ENCODE measurements at regions of chr1 and their contacts with region 1.

Region 1: DNA sequence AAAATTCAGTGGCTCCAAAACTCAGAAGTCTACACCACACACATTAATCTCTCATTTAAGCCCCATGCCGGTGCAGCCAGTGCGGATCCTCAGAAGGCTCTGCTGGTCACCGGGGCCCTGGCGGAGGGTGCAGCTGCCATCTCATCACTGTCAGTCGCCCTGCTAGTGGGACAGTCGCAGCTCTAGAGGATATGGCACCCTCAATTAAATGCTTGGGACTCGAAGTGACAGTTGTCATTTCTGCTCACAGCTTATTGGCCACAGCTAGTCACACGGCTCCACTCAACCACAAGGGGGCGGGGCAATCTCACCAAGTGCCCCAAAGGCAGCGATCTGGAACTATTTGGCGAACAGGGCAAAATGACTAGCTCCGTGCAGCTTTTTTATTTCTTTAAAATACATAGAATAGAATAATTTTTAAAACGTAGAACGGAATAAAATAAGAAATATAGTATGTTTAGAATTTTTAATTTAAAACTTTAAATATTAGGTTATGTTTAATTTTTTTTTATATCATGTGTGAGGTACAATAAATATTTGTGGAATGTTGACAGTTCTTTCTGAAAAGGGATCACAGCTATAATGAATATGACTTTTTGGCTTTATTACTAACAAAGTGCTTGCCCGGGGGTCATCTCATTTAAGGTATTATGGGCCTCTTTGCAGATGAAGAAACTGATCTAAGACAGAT is 8.0 kb upstream of the MAN1C1 start:
- DNase-seq: peak; percentile 78 to 94
- ATAC-seq: peak; percentile 95 to 99 (median 99)
- H3K4me3 ChIP-seq: no peak overlapping the region
- H3K4me3 Mint-ChIP-seq: no peak overlapping the region
- H3K27ac ChIP-seq: no peak overlapping the region
- H3K27ac Mint-ChIP-seq: no peak overlapping the region
- H3K4me1 ChIP-seq: peaks cover 6% of the 10 kb centered on the region
- H3K4me1 Mint-ChIP-seq: peaks cover 2 to 5% of the 10 kb centered on the region in 2 donors
- H3K27me3 ChIP-seq: peaks cover 2% of the 10 kb centered on the region
- H3K27me3 Mint-ChIP-seq: peaks cover 8 to 13% of the 10 kb centered on the region in 2 donors
- CTCF ChIP-seq: no peak

Region 2: DNA sequence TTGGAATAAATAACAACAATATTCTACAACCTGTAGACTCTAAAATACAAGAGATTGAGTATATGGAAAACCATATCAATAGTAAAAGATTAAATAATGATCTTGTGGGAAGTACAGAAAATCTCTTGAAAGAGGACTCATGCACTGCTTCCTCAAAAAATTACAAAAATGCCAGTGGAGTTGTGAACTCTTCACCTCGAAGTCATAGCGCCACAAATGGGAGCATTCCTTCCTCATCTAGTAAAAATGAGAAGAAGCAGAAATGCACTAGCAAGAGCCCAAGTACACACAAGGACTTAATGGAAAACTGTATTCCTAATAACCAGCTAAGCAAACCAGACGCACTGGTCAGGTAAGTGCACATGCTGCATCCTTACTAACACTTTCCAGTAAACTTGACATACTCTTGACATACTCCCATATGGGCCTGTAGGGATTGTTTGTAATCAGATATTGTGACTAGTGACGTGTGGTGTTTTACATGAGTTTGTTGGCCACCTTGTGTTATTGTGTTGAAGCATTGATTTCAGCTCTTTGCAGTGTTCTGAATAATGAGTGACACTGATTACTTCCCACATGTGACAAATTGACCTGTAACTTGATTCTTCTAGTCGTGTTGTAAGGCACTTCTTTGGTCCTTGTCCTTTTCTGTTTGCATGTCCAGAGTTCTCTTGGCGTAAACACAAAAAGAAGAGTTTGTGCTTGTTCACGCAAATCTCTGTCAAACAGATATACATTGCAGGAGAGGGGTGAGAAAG is 149.9 kb before region 1 on chr1:
- intact Hi-C with region 1: no loop called
- DNase-seq: no peak
- ATAC-seq: no peak
- H3K4me3 ChIP-seq: no peak overlapping the region
- H3K4me3 Mint-ChIP-seq: no peak overlapping the region
- H3K27ac ChIP-seq: no peak overlapping the region
- H3K27ac Mint-ChIP-seq: no peak overlapping the region
- H3K4me1 ChIP-seq: no peaks in the 10 kb centered on the region
- H3K4me1 Mint-ChIP-seq: no peaks in the 10 kb centered on the region
- H3K27me3 ChIP-seq: no peaks in the 10 kb centered on the region
- H3K27me3 Mint-ChIP-seq: no peaks in the 10 kb centered on the region
- CTCF ChIP-seq: no peak

Region 3: DNA sequence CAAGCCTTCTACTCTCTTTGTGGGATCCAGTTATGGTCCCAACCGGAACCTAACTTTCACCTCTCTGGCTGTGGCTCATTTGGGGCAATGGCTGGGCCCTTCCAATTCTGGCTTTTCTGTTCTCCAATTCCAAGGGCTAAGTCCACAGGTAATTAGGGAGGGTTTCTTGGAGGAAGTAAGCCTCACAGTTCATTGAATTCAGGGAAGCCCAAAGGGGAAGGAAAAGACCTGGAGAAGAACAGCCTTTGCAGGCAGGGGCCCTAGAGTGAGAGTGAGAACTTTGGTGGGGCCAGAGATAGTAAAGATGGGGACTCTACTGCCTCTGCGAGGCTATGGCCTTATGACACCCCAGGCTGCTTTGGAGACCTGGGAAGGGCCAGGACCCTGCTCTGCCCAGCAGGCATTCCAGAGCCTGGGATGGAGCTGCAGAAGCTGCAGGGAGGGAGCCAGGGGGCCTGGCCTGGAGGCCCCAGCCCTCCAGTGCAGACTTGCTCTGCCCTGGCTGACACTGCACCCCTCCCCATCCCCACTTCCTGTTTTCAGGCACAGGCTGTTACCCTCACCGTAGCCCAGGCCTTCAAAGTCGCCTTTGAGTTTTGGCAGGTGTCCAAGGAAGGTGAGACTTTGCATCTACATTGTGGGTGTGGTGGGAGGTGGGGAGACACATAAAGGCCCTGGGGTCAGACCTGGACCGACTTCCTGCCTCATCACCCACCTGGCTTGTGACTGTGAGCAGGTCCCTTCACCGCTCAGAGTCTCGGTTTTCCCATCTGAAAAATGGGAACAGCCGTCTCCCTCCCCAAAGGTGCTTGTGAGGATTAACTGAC is 46.3 kb before region 1 on chr1:
- intact Hi-C with region 1: loop called (anchors 2 kb)
- DNase-seq: peak; percentile 56 to 95
- ATAC-seq: peak; percentile 86 to 90 (median 90)
- H3K4me3 ChIP-seq: no peak overlapping the region
- H3K4me3 Mint-ChIP-seq: peak overlapping the region; percentile 77
- H3K27ac ChIP-seq: peak overlapping the region; percentile 67
- H3K27ac Mint-ChIP-seq: peak overlapping the region; percentile 84 to 89
- H3K4me1 ChIP-seq: peaks cover 82% of the 10 kb centered on the region
- H3K4me1 Mint-ChIP-seq: peaks cover 21 to 55% of the 10 kb centered on the region in 2 donors
- H3K27me3 ChIP-seq: no peaks in the 10 kb centered on the region
- H3K27me3 Mint-ChIP-seq: no peaks in the 10 kb centered on the region
- CTCF ChIP-seq: no peak

Measured in natural killer cell (primary cell).